ENCODE measurements at regions of chr21 and their contacts with region 1.

Region 1: GRCh38 chr21:30502041-30502440 is at the start of gene KRTAP19-5:
- DNase-seq: no peak
- H3K4me3 ChIP-seq: no peak within 1 kb of the TSS
- H3K4me3 Mint-ChIP-seq: no peak within 1 kb of the TSS
- H3K27ac Mint-ChIP-seq: no peak within 1 kb of the TSS
- H3K4me1 ChIP-seq: no peaks in the 10 kb centered on the region
- H3K4me1 Mint-ChIP-seq: no peaks in the 10 kb centered on the region
- H3K27me3 ChIP-seq: no peaks in the 10 kb centered on the region
- H3K27me3 Mint-ChIP-seq: peaks cover 9% of the 10 kb centered on the region
- CTCF ChIP-seq: no peak
- total RNA-seq, gene KRTAP19-5: not detected in 2 replicates

Region 2: DNA sequence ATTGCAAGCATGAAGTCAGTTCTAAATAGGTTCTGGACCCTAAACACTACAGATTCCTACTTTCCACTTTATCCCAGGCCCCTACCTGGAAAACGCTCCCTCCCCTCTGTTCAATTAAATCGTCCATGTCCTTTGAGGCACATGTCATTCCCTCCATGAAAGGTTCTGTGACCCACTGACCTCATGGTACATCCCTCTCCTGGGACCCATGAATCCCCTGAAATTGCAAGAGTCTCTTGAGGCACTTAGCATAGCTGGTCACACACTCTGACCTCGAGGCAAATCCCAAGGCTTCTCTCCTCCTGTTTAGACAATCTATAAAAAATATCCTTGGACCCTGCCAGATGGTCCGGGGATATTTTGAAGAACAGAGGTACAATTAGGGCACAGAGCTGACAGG is 570.5 kb after region 1 on chr21:
- CTCF ChIA-PET with region 1: no interaction called
- POLR2A ChIA-PET with region 1: no interaction called
- intact Hi-C with region 1: loop called (anchors 5 kb)
- DNase-seq: no peak
- H3K4me3 ChIP-seq: no peak overlapping the region
- H3K4me3 Mint-ChIP-seq: no peak overlapping the region
- H3K27ac Mint-ChIP-seq: no peak overlapping the region
- H3K4me1 ChIP-seq: no peaks in the 10 kb centered on the region
- H3K4me1 Mint-ChIP-seq: no peaks in the 10 kb centered on the region
- H3K27me3 ChIP-seq: no peaks in the 10 kb centered on the region
- H3K27me3 Mint-ChIP-seq: peaks cover 4% of the 10 kb centered on the region
- CTCF ChIP-seq: no peak